Posterior vena cava (tissue), 2 donors: ENCODE measurements at regions of chr17 and their contacts with region 1.

Region 1: GRCh38 chr17:49851387-49852291 is 3.8 kb upstream of the TAC4 start:
- DNase-seq: peak; percentile 95

Region 2: DNA sequence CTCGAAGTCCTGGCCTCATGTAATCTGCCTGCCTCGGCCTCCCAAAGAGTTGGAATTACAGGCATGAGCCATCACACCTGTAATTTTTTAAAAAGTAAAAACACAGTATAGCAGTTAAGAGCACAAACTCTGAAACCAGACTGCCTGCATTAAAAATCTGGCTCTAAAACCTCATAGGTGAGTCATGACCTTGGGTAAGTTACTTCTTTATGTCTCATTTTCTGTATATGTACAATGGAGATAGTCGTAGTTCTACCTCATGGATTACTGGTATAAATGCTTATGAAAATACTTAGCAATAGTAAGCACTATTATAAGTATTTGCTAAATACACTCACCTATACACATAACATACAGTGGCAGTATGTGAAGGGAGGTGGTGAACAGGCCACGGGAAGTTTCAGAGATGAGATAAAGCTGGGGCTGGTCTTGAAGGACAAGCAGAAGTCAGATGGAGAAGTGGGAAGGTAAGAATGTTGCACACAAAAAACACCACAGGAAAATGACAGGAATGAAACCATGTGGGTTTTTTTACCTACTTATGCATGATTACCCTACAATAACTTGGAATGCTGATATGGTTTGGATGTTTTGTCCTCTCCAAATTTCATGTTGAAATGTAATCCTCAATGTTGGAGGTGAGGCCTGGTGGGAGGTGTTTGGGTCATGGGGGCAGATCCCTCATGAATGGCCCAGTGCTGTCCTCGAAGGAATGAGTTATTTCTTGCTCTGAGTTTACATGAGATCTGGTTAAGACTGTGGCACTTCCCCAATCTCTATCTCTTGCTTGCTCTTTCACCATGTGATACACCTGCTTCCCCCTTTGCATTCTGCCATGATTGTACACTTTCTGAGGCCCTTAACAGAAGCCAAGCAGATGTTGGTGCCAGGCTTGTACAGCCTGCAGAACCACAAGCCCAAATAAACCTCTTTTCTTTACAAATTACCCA is 523.5 kb before region 1 on chr17:
- intact Hi-C with region 1: no loop called
- DNase-seq: no peak

Region 3: DNA sequence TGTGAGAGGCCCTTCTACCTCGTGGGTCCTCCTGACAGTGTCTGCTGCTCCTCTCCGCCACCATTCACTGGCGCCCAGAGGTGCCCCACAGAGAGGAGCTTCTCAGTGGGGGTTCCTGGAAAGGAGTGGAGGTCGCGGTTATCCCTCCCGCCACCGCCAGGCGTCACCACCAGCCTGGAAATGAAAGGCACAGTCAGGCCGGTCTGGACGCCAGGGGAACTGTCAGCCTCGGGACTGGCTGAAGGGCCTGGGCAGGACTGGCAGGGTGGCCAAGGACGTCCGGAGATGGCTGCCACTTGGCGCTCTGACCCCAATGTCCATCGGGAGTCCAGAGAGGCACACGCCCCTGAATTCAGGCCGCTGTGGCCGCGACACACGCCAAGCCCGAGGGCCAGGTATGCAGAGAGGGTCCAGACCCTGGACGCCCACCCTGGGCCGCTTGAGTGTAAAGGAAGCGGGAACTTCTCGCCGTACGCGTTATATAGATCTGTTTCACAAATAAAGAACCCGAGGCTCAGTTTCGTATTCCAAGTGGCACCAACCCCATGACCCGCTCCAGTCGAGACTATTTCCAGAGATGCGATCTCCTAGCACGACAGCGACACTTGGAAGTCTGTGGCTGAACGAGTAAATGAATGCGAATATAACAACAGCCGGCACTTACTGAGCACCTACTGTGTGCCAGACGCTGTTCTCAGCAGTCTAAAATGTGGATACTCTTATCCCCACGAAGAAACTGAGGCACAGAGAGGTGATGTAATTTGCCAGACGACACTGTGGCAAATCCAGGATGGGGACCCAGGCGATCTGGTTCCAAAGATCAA is 283.6 kb before region 1 on chr17:
- intact Hi-C with region 1: loop called (anchors 5 kb)
- DNase-seq: peak; percentile 97

Region 4: GRCh38 chr17:49707608-49708514 is 143.8 kb before region 1 on chr17 and contains the start of gene SLC35B1:
- intact Hi-C with region 1: loop called in 1 of 2 experiments (anchors 5 kb)
- DNase-seq: peak; percentile 100
- total RNA-seq, gene SLC35B1: 28.1 to 33.3 TPM